ENCODE measurements at regions of chr11 and their contacts with region 1.

Region 1: DNA sequence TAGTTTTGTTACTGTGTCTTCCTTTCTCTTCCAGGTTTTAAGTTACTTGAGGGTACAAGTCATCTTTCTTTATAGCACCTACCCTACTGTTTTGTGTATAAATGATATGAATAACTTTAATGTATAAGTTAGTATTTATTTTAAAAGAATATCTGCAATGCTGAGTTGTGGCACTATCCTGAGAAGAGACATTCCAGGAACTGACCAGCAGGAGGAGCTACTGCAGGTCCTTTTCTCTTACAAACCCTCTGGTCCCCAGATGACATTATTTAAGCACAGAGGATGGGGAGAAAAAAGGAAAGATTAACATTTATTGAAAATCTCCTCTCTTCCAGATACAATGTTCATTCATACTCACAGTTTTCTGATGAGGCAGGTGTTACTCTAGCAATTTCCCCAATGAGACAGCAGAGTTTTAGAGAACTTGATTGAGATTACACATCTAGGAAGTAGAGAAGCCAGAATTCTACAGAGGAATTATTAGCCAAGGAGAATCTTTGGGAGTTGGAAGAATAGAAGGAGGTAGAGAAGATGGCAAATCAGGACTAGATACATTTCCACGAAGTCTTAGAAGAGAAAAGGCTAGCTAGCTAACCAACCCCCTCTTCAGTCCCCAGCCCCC is 541.2 kb upstream of the API5 start:
- DNase-seq: no peak
- ATAC-seq: no peak

Region 2: DNA sequence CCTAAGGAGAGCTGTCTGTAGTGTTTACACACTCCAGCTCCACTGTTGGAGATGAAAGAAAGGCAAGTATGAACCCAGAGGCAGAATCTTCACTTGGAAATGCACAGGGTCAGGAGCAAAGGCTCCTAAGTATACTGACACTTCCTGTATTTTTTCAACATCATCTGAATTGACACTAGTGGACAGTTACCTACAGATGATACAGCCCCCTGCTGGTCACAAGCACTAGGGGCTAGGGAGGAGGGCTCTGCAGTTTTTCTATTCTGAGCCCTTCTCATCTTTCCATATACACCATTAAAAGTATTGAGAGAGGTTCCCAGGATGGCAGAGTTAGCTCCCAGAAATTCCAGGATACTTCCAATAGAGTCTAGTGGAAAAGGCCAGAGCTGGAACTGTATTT is 250.9 kb after region 1 on chr11:
- intact Hi-C with region 1: loop called (anchors 2 kb)
- DNase-seq: no peak
- ATAC-seq: no peak

Region 3: DNA sequence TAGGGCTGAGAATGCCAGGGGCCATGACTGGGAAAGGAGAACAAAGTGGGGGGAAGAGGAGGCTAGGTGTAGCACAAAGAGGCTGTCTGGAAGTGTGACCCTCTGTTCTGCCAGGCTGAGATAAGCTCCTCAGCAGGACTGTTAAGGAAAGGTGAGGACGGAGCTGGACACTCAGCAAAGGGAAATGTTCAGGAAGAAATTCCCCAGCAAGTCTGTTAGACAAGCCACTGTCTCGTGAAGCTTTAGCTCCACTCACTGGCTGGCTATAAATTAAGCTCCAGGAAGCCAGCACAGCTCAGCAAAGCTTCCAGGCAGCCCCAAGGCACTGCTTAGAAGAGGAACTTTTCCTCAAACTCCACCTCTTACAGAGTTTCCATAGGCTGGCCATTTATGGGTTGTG is 360.1 kb after region 1 on chr11:
- intact Hi-C with region 1: loop called (anchors 1 kb)
- DNase-seq: no peak
- ATAC-seq: peak; percentile 26

Region 4: DNA sequence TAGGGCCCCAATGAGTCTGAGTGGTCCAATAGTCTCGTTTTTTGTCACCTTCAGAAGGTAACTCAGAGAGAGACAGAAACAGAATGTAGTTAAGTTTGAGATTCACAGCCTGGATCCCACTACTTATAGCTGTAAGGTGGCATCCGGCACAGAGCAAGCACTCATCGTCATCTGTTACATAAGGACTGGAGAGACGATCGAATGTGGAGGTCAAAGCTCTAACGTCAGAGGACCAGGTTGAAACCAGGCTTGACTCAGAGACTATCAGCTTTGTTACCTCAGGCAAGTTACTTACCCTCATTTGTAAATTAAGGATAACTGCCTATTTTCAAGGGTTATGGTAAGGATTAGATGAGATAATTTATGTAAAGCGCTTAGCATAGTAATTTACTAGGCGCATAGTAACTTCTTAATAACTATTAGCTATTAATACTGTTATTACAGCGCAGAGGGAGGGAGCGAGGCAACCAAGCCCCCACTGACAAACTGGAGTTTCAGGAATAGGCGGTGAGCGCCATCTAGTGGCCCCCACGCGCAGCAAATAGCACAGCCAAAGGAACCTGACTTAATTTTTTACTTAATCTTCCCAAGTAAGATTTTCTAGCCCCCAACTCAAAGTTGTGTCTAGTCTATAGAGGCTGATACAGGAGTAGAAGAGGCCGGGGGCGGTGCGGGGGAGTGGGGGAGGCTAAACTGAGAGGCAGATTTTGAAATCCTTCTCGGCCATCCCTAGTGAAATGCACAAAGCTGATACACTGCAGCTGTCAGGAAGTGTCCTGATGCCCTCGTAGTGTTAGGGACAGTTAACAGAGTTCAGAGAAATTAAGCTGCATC is 512.3 kb after region 1 on chr11:
- intact Hi-C with region 1: loop called (anchors 5 kb)
- DNase-seq: peak; percentile 67
- ATAC-seq: peak; percentile 26

Measured in Right ventricle myocardium inferior (tissue), 1 donor.